WTC11 (cell line): ENCODE measurements at regions of chr17 and their contacts with region 1.

Region 1: DNA sequence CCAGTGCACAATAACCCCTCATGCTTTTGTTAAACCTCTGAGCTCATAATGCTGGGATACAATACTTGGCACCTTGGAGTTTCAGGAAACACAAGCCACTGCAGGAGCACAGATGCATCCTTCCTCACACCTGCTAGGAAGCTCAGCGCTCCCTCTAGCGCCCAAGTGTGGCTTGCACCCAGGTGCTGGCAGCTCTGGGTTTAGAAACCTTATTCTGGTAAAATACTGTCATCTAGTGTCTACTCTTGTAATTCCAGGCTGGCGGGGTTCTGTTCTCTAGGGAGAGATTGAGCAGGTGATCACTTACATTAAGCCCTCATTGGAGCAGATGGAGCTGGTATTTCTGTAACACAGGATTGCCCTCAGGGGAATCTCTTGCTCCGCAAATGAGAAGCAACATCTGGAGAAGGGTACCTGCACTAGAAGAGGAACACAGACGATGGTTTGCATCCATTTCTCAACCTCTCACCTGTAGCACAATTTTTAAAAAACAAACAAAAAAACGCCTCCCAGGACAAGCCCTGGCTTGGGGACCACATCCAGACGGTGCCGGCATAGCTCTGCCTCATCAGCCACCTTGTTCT is 1.5 kb downstream of the CCL1 start:
- DNase-seq: peak; percentile 97
- ATAC-seq: peak; percentile 96
- H3K4me3 Mint-ChIP-seq: no peak overlapping the region
- H3K27ac Mint-ChIP-seq: no peak overlapping the region
- H3K4me1 Mint-ChIP-seq: peaks cover 5% of the 10 kb centered on the region
- H3K27me3 Mint-ChIP-seq: peaks cover 13% of the 10 kb centered on the region; the same call in 1 of the 2 replicates
- CTCF ChIP-seq: peak; percentile 89

Region 2: GRCh38 chr17:34081269-34081668 is 280.3 kb before region 1 on chr17:
- CTCF ChIA-PET with region 1: interaction called, 12 read pairs
- POLR2A ChIA-PET with region 1: no interaction called
- DNase-seq: peak; percentile 54
- ATAC-seq: peak; percentile 87
- H3K4me3 Mint-ChIP-seq: no peak overlapping the region
- H3K27ac Mint-ChIP-seq: no peak overlapping the region
- H3K4me1 Mint-ChIP-seq: peaks cover 23% of the 10 kb centered on the region
- H3K27me3 Mint-ChIP-seq: no peaks in the 10 kb centered on the region
- CTCF ChIP-seq: 0 out of 2 replicates have a peak, but pooled peaks have one; percentile 42

Region 3: DNA sequence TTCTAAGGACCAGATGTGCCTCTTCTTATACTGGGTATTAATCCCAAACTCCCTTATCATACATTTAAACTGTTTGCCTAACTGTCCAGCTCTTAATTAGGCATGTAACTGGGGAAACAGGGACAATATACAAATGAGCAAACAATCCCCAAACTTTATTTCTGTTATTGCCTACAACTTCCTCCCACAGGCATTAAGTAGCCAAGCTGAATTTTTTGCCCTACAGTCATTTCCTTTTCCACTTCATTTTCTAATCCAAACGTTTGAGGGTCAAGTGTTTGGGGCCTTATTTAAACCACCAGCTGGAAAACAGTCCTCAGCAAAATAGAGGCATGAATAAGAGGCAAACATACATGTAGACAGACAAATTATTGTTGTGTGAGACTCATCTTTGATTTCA is 183.9 kb before region 1 on chr17:
- CTCF ChIA-PET with region 1: interaction called, 26 read pairs
- POLR2A ChIA-PET with region 1: no interaction called
- DNase-seq: no peak
- ATAC-seq: no peak
- H3K4me3 Mint-ChIP-seq: no peak overlapping the region; the same call in 1 of the 2 replicates
- H3K27ac Mint-ChIP-seq: peak overlapping the region; percentile 35; the same call in 1 of the 2 replicates
- H3K4me1 Mint-ChIP-seq: peaks cover 48% of the 10 kb centered on the region
- H3K27me3 Mint-ChIP-seq: no peaks in the 10 kb centered on the region
- CTCF ChIP-seq: no peak

Region 4: GRCh38 chr17:34248511-34249024 is 113.0 kb before region 1 on chr17:
- CTCF ChIA-PET with region 1: interaction called, 28 read pairs
- POLR2A ChIA-PET with region 1: no interaction called
- DNase-seq: no peak
- ATAC-seq: no peak
- H3K4me3 Mint-ChIP-seq: no peak overlapping the region
- H3K27ac Mint-ChIP-seq: no peak overlapping the region
- H3K4me1 Mint-ChIP-seq: peaks cover 28% of the 10 kb centered on the region
- H3K27me3 Mint-ChIP-seq: peaks cover 13% of the 10 kb centered on the region
- CTCF ChIP-seq: no peak

Region 5: DNA sequence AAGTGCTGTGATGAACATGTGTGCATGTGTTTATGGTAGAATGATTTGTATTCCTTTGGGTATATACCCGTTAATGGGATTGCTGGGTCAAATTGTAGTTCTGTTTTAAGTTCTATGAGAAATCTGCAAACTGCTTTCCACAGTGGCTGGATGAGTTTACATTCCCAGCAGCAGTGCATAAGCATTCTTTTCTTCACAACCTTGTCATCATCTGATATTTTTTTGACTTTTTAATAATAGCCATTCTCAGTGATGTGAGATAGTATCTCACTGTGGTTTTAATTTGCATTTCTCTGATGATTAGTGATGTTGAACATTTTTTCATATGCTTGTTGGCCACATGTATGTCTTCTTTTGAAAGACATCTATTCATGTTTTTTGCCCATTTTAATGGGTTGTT is 23.9 kb before region 1 on chr17:
- CTCF ChIA-PET with region 1: interaction called, 23 read pairs
- POLR2A ChIA-PET with region 1: no interaction called
- DNase-seq: no peak
- ATAC-seq: no peak
- H3K4me3 Mint-ChIP-seq: no peak overlapping the region
- H3K27ac Mint-ChIP-seq: no peak overlapping the region
- H3K4me1 Mint-ChIP-seq: no peaks in the 10 kb centered on the region
- H3K27me3 Mint-ChIP-seq: peaks cover 8% of the 10 kb centered on the region
- CTCF ChIP-seq: no peak

Region 6: GRCh38 chr17:34398990-34399389 is 37.4 kb after region 1 on chr17:
- CTCF ChIA-PET with region 1: interaction called, 35 read pairs
- POLR2A ChIA-PET with region 1: no interaction called
- DNase-seq: no peak
- ATAC-seq: no peak
- H3K4me3 Mint-ChIP-seq: no peak overlapping the region
- H3K27ac Mint-ChIP-seq: no peak overlapping the region
- H3K4me1 Mint-ChIP-seq: peaks cover 18% of the 10 kb centered on the region
- H3K27me3 Mint-ChIP-seq: peaks cover 19% of the 10 kb centered on the region
- CTCF ChIP-seq: no peak